ENCODE measurements at regions of chr3 and their contacts with region 1.

Region 1: DNA sequence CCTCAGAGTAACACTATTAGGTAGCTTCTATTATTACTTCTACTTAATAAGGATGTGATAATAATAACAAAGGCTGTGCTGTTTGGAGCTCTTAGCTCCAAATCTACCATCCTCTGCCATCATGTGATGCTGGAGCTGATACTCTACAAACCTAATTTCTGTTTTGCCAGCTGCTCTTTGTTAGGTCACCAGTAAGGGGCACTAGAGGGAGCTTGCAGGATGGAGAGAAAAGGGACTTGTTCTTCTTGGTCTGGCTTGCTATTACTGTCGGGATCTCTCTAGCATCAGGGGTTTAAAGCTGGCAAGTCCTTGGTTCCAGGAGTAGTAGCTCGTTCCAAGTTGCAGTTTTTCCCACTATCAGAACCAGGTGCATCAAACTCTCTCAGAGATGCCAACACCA is 194.9 kb upstream of the KBTBD8 start:
- DNase-seq: no peak
- ATAC-seq: no peak
- H3K4me3 ChIP-seq: no peak overlapping the region
- H3K4me3 Mint-ChIP-seq: no peak overlapping the region
- H3K27ac ChIP-seq: no peak overlapping the region
- H3K27ac Mint-ChIP-seq: no peak overlapping the region
- H3K4me1 ChIP-seq: no peaks in the 10 kb centered on the region
- H3K4me1 Mint-ChIP-seq: no peaks in the 10 kb centered on the region
- H3K27me3 ChIP-seq: peaks cover 0 to 6% (median 3%) of the 10 kb centered on the region in 4 experiments
- H3K27me3 Mint-ChIP-seq: peaks cover 28% of the 10 kb centered on the region
- CTCF ChIP-seq: no peak

Region 2: DNA sequence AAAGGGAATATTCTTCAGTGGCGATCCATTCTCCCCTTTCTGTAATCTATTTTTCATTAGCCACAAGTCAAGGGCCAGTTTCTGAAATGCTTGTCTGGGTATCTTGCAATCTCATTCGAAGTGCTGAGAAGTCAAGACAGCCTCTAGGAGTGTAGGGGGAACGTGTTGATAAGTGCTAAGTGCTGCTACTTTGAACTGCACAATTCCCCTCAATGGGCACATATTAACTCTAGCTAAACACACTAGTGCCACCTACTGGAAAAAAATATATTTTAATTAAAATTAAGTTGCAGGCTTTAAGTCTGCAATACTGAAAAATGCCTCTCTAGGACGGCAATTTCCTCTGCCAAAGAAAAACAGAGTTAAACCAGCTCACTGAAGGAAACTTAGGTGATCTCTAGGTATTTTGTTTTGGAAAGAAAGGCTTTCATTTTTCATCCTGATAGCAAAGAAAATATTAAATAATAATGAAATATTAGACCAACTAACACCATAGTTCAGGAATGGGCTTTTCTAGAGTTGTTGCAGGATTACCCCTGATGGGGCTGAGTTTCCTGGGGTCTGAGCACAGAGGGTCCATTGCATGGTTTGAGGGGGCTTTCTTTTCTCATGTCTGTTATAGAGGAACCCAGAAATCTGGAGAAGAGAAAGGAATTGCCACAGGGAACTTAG is 13.0 kb after region 1 on chr3:
- CTCF ChIA-PET with region 1: interaction called, 21 read pairs
- POLR2A ChIA-PET with region 1: no interaction called
- intact Hi-C with region 1: no loop called
- DNase-seq: peak; percentile 52
- ATAC-seq: peak; percentile 47
- H3K4me3 ChIP-seq: no peak overlapping the region
- H3K4me3 Mint-ChIP-seq: no peak overlapping the region
- H3K27ac ChIP-seq: no peak overlapping the region
- H3K27ac Mint-ChIP-seq: no peak overlapping the region
- H3K4me1 ChIP-seq: no peaks in the 10 kb centered on the region
- H3K4me1 Mint-ChIP-seq: no peaks in the 10 kb centered on the region
- H3K27me3 ChIP-seq: peaks cover 0 to 6% (median 2%) of the 10 kb centered on the region in 4 experiments
- H3K27me3 Mint-ChIP-seq: peaks cover 15% of the 10 kb centered on the region
- CTCF ChIP-seq: peak; percentile 85

Region 3: DNA sequence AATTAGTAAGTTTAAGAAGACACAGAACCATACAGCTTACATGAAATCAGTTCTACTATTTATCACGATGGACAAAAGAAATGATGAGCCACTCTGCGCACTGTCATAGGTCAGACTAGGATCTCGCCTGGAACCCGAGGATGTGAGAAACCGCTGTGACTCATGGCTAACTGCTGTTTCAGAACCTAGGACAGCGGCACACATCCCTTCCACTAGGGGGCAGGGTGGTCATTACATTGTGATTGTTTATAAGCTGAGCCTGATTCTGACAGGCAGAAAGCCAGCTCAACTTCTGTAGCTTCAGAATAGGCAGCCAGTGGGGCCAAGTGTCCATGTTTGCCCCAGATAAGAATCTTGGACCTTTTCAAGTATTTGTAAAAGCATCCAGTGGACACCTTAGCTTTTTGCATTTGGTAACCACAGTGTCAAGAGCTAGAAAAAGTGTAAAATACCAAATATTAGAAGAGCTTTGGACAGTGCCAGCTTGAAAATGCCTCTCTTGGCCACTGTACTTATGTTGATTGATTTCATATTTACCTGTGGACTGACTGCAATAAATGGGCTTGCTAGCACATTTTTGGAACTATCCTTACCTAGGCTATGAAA is 310.7 kb after region 1 on chr3:
- CTCF ChIA-PET with region 1: no interaction called
- POLR2A ChIA-PET with region 1: no interaction called
- intact Hi-C with region 1: no loop called
- DNase-seq: peak; percentile 80
- ATAC-seq: peak; percentile 94
- H3K4me3 ChIP-seq: no peak overlapping the region
- H3K4me3 Mint-ChIP-seq: no peak overlapping the region
- H3K27ac ChIP-seq: no peak overlapping the region
- H3K27ac Mint-ChIP-seq: no peak overlapping the region
- H3K4me1 ChIP-seq: no peaks in the 10 kb centered on the region
- H3K4me1 Mint-ChIP-seq: peaks cover 1% of the 10 kb centered on the region
- H3K27me3 ChIP-seq: peaks cover 0 to 6% (median 2%) of the 10 kb centered on the region in 4 experiments
- H3K27me3 Mint-ChIP-seq: peaks cover 17% of the 10 kb centered on the region
- CTCF ChIP-seq: peak; percentile 96

Measured in B cell (primary cell).